BJ (cell line): ENCODE measurements at regions of chr12 and their contacts with region 1.

Region 1: GRCh38 chr12:19304155-19304765 is 135.0 kb upstream of the AEBP2 start:
- DNase-seq: no peak
- H3K4me3 ChIP-seq: no peak overlapping the region
- H3K27me3 ChIP-seq: no peaks in the 10 kb centered on the region
- CTCF ChIP-seq: no peak

Region 2: GRCh38 chr12:18400186-18400585 is 904.1 kb before region 1 on chr12:
- CTCF ChIA-PET with region 1: no interaction called
- POLR2A ChIA-PET with region 1: interaction called, 16 read pairs
- DNase-seq: no peak
- H3K4me3 ChIP-seq: no peak overlapping the region
- H3K27me3 ChIP-seq: no peaks in the 10 kb centered on the region
- CTCF ChIP-seq: no peak

Region 3: DNA sequence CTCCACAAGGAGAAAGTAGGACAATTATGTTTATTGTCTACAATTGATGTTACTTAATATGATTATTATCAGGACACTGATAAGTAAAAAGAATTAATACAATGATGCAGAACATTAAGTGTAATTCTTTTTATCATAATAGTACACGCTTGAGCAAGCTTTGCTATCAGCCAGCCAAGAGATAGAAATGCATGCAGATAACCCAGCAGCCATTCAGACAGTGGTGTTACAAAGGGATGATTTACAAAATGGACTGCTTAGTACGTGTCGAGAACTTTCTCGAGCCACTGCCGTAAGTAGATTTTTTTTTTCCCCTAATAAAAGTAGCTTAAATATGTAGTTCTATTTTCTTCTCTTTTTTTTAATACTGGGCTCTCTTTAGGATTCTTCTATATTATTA is 18.1 kb after region 1 on chr12:
- CTCF ChIA-PET with region 1: no interaction called
- POLR2A ChIA-PET with region 1: no interaction called
- DNase-seq: no peak
- H3K4me3 ChIP-seq: no peak overlapping the region
- H3K27me3 ChIP-seq: no peaks in the 10 kb centered on the region
- CTCF ChIP-seq: no peak